Sigmoid colon (tissue), 7 donors: ENCODE measurements at regions of chr3 and their contacts with region 1.

Region 1: DNA sequence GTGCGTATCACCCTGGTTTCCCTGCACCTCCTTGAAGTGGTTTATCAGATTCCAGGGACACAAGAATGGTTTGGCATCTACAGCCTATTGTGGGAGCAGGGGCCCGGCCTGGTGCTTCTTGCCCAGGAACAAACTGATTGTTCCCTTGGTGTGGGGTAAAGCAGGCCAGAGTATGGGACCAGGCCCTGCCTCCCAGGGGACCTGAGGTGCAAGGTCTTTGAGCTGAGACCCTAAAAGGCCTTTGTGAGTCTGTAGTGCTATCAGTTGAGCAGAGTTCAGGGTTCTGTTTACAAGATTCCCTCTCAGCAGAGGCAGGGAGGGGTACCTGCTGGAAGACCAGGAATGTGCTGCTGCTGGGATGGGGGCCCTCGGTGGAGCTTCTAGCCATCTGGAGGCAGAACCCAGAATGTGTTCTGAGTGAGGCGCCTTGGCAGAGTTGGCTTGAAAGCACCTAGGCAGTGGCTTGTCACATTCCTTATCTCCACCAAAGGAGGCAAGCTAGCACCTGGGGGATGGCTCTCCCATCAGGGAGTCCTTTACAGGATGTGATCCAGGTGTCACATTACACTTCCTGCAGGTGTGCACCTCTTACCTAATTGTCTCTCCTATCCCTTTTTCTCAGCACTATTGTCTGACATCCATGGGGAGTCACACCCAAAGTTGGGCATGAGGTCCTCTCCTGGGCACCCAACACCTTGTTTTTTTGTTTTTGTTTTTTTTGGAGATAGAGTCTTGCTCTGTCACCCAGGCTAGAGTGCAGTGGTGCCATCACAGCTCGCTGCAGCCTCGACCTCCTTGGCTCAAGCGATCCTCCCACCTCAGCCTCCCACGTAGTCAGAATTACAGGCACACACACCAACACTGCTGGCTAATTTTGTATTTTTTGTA is 13.1 kb downstream of the FLNB start:
- DNase-seq: no peak
- H3K4me3 ChIP-seq: no peak overlapping the region
- H3K27ac ChIP-seq: peak overlapping the region; percentile 86 to 93 (median 88)
- H3K4me1 ChIP-seq: peaks cover 0 to 97% (median 86%) of the 10 kb centered on the region in 4 donors
- H3K27me3 ChIP-seq: no peaks in the 10 kb centered on the region
- CTCF ChIP-seq: no peak
- EP300 ChIP-seq: no peak
- POLR2A ChIP-seq: no peak

Region 2: DNA sequence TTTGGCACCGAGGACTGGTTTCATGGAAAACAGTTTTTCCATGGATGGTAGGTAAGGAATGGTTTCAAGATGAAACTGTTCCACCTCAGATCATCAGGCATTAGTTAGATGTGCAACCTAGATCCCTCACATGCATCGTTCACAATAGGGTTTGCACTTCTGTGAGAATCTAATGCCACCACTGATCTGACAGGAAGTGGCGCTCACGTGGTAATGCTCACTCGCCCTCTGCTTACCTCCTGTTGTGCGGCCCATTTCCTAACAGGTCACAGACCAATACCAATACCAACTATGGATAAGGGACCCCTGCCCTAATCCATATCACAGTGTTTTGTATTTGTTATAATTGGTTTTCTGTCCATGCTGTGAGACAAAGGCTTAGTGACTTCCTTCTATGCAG is 206.3 kb before region 1 on chr3:
- intact Hi-C with region 1: no loop called
- DNase-seq: no peak
- H3K4me3 ChIP-seq: no peak overlapping the region
- H3K27ac ChIP-seq: no peak overlapping the region
- H3K4me1 ChIP-seq: peaks cover 0 to 15% (median 12%) of the 10 kb centered on the region in 4 donors
- H3K27me3 ChIP-seq: no peaks in the 10 kb centered on the region
- CTCF ChIP-seq: no peak
- EP300 ChIP-seq: no peak
- POLR2A ChIP-seq: no peak

Region 3: DNA sequence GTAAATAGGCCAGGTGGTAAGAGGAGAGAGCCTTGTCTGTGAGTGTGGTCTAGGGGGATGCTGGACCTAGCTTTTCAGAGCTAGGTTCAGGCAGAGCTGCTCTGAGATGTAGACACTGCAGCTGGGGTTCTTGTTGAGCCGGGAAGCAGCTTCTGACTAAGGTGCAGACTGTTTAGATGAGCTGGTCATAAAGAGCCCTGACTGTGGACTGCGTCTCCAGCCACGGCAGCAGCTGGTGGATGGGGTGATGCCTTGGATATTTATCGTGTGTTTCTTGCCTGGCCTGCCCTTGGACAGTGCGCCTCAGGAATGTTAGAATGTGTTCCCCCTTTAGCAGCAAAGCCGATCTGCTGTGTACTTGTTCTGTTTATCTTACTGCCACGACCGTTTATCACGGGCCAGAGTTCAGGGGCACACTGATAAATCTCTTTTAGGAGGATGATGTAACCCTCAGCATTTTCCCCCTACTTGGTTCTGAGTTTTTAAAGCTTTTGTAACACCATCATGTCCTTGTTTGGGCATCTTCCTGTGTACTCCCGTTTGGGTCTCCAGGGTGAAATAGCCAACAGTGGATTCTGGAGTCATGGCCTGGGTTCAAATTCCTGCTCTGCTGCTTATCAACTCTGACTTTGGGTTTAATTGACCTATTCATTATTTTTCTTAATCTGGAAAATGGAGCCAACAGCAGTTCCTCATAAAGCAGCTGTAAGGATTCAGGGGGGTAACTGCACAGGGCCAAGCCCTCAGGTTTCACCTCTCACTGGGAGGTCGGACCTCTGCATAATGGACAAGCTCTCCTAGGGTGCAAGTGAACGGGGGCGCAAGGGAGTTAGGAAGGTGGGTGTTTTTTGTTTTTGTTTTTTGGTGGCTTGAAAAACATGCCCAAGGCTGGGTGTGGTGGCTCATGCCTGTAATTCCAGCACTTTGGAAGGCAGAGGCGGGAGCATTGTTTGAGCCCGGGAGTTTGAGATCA is 38.3 kb after region 1 on chr3:
- intact Hi-C with region 1: loop called (anchors 5 kb)
- DNase-seq: peak; percentile 91
- H3K4me3 ChIP-seq: peak overlapping the region in 1 of 4 donors; percentile 0
- H3K27ac ChIP-seq: peak overlapping the region; percentile 81 to 93 (median 82)
- H3K4me1 ChIP-seq: peaks cover 0 to 91% (median 75%) of the 10 kb centered on the region in 4 donors
- H3K27me3 ChIP-seq: no peaks in the 10 kb centered on the region
- CTCF ChIP-seq: no peak
- EP300 ChIP-seq: peak in 3 of 4 donors; percentile 81 to 95 (median 93)
- POLR2A ChIP-seq: peak in 1 of 2 donors; percentile 75

Region 4: DNA sequence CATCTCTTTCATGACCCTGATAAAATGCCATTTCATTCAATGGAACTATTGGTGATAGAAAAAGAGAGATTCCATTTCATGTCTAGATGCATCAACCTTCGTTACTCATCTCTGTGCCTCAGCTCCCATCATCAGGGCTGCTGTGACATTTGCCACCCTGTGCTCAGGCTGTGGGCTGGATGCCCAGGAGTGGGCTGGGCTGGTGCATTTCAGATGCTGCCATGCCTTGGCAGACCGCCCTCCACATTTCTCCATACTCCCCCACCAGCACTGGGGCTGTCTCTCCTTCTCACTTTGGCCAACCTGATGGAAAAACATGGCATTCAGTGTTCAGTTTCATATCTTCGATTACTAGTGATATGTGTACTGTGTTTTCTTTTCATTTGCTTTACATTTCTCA is 130.3 kb after region 1 on chr3:
- intact Hi-C with region 1: no loop called
- DNase-seq: peak; percentile 80
- H3K4me3 ChIP-seq: no peak overlapping the region
- H3K27ac ChIP-seq: peak overlapping the region in 2 of 4 donors; percentile 52 to 66
- H3K4me1 ChIP-seq: peaks cover 0 to 29% (median 16%) of the 10 kb centered on the region in 4 donors
- H3K27me3 ChIP-seq: no peaks in the 10 kb centered on the region
- CTCF ChIP-seq: no peak
- EP300 ChIP-seq: no peak
- POLR2A ChIP-seq: no peak